Head of caudate nucleus (tissue), 42 donors: ENCODE measurements at regions of chr14 and their contacts with region 1.

Region 1: DNA sequence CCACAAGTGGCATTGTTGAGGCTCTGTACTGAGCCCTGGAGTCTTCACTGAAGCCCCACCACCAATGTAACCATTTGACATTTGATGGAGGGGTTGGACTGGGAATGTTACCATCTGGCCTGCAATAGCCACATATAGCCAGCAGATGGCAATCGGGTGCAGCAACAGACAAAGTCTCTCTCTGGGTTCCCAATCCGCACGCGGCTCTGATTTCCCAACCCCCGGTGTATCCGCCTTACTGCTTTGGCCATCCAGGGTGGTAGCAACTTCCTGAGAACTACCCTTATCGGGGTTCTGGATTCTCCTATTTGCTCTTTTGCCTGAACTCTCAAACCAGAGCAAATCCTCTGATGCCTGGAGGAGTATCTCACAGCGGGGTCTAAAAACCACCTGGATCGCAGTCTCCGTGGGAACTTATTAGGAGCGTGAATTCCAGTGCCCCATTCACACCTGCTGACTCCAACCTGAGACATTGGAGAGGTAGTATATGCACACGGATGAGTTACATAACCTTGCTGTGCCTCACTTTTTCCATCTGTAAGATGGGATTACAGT is 14.2 kb downstream of the VRTN start:
- DNase-seq: peak; percentile 66 to 93 (median 84)

Region 2: DNA sequence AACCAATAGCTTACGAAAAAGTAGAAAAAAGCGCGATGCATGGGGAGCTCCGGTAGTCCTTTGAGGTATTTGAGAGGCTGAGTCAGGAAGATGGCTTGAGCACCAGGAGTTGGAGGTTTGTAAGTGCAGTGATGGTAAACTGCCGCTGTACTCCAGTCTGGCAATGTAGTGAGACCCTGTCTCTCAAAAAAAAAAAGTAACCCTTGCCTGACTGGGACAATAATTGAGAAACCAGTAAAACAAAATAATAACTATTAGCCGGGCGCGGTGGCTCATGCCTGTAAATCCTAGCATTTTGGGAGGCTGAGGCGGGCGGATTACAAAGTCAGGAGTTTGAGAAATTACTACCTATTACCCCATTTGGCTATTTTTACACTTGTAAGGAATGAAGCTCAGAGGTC is 794.1 kb before region 1 on chr14:
- intact Hi-C with region 1: no loop called
- DNase-seq: no peak

Region 3: GRCh38 chr14:74478996-74479635 is 116.7 kb after region 1 on chr14:
- intact Hi-C with region 1: loop called (anchors 2 kb)
- DNase-seq: peak in 8 of 42 donors; percentile 35 to 70 (median 54)